Activated naive CD4-positive, alpha-beta T cell treated with anti-CD3 and anti-CD28 coated beads for 36 hours (primary cell): ENCODE measurements at regions of chr2 and their contacts with region 1.

Region 1: GRCh38 chr2:231900486-231900942 is 25.7 kb downstream of the NPPC start:
- DNase-seq: peak; percentile 66
- H3K4me3 Mint-ChIP-seq: no peak overlapping the region
- H3K27ac Mint-ChIP-seq: no peak overlapping the region
- H3K4me1 Mint-ChIP-seq: no peaks in the 10 kb centered on the region
- H3K27me3 Mint-ChIP-seq: no peaks in the 10 kb centered on the region

Region 2: GRCh38 chr2:231378026-231378722 is 522.3 kb before region 1 on chr2:
- CTCF ChIA-PET with region 1: no interaction called
- intact Hi-C with region 1: no loop called
- DNase-seq: no peak
- H3K4me3 Mint-ChIP-seq: no peak overlapping the region
- H3K27ac Mint-ChIP-seq: no peak overlapping the region
- H3K4me1 Mint-ChIP-seq: no peaks in the 10 kb centered on the region
- H3K27me3 Mint-ChIP-seq: no peaks in the 10 kb centered on the region

Region 3: GRCh38 chr2:231706731-231707624 is 193.5 kb before region 1 on chr2:
- CTCF ChIA-PET with region 1: no interaction called
- intact Hi-C with region 1: no loop called
- DNase-seq: peak; percentile 98
- H3K4me3 Mint-ChIP-seq: peak overlapping the region; percentile 91
- H3K27ac Mint-ChIP-seq: peak overlapping the region; percentile 100
- H3K4me1 Mint-ChIP-seq: peaks cover 18% of the 10 kb centered on the region
- H3K27me3 Mint-ChIP-seq: peaks cover 2% of the 10 kb centered on the region

Region 4: GRCh38 chr2:231743376-231744116 is 157.0 kb before region 1 on chr2:
- CTCF ChIA-PET with region 1: no interaction called
- intact Hi-C with region 1: no loop called
- DNase-seq: no peak
- H3K4me3 Mint-ChIP-seq: no peak overlapping the region
- H3K27ac Mint-ChIP-seq: no peak overlapping the region
- H3K4me1 Mint-ChIP-seq: no peaks in the 10 kb centered on the region
- H3K27me3 Mint-ChIP-seq: no peaks in the 10 kb centered on the region

Region 5: DNA sequence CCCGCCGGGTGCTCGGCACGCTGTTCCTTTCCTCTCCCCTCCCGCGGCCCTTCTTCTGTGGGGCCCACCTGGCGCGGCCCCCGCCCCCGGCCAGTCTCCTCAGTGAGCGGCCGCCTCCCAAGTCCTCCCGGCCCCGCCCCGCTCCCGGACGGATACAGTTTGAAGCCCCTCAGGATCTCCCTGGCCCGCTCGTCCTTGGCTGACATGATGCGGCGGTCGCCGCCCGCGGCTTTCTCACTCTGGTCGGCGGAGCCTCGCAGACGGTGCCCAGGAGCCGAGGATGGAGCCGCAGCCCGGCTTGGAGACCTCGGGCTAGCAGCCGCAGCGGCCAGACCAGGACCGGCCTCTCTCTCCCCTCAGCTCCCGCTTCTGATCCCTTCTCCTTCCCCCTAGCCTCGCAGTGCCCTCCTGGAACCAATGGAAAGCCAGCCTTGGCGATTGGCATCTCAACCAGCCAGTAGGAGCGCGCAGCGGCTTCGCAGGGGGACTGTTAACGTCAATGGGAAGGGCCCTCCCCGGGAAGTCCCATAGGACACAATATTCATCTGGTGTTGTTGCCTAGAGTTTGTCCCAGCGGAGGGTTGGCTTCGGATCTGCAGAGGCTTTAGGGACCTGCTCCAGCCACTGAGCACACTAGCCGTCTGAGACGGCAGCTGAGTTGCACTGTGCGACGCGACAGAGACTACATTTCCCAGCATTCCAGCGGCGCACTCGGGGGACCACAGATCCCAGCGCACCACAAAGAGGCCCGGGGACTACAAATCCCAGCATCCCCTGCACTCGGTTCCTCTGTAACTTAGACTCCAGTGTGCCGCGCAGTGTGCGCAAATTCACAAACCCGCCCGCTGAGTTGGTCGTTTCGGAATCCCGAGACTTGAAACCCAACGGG is 119.4 kb before region 1 on chr2 and contains the start of gene PDE6D:
- CTCF ChIA-PET with region 1: no interaction called
- intact Hi-C with region 1: no loop called
- DNase-seq: peak; percentile 98
- H3K4me3 Mint-ChIP-seq: peak within 1 kb of the TSS; percentile 92
- H3K27ac Mint-ChIP-seq: peak within 1 kb of the TSS; percentile 96
- H3K4me1 Mint-ChIP-seq: peaks cover 47% of the 10 kb centered on the region
- H3K27me3 Mint-ChIP-seq: no peaks in the 10 kb centered on the region
- total RNA-seq, gene PDE6D: 25.6 to 27.1 TPM

Region 6: DNA sequence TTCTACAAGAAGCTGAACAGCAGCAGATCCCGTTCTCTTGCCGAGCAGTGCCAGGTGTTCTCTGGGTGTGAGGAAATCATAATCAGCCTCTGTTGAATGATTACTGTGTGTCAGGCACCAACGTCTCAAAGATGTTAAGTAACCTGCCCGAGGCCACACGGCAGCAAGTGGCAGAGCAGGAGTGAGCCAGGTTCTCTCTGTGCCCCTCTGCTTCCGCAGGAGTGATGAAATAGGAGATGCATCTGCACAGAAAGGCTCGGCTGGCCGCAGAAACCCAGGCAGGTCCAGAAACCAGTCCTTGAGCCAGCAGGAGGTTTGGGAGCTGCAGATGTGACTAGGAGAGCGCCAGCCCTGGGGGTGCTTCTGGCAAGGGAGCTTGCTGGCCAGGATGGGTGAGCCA is 45.8 kb before region 1 on chr2:
- CTCF ChIA-PET with region 1: interaction called, 14 read pairs
- intact Hi-C with region 1: no loop called
- DNase-seq: no peak
- H3K4me3 Mint-ChIP-seq: no peak overlapping the region
- H3K27ac Mint-ChIP-seq: no peak overlapping the region
- H3K4me1 Mint-ChIP-seq: no peaks in the 10 kb centered on the region
- H3K27me3 Mint-ChIP-seq: peaks cover 6% of the 10 kb centered on the region

Region 7: DNA sequence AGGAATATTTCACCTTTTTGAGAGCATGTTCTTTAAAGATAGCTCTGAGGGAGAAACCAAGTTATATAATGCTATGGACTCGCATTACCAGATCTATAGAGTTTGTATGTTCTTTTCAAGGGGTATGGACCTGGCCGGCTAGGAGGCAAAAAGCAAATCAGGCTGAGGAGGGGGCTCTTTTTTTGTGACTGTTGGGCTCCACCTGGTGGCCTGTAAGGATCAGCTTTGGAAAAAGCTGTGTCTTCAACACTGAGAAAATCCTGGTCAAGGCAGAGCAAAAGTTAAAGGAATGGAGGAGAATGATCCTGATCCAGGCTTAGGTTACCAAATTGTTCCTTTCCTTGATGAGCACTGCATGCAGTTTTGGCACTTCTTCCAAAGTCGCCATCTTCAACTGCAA is 241.5 kb after region 1 on chr2:
- CTCF ChIA-PET with region 1: interaction called, 15 read pairs
- intact Hi-C with region 1: no loop called
- DNase-seq: peak; percentile 65
- H3K4me3 Mint-ChIP-seq: no peak overlapping the region
- H3K27ac Mint-ChIP-seq: no peak overlapping the region
- H3K4me1 Mint-ChIP-seq: peaks cover 37% of the 10 kb centered on the region
- H3K27me3 Mint-ChIP-seq: no peaks in the 10 kb centered on the region